Right ventricle myocardium inferior (tissue), 1 donor: ENCODE measurements at regions of chr3 and their contacts with region 1.

Region 1: GRCh38 chr3:46276502-46277099 is 34.3 kb downstream of the CCR3 start:
- DNase-seq: no peak
- ATAC-seq: peak; percentile 59

Region 2: DNA sequence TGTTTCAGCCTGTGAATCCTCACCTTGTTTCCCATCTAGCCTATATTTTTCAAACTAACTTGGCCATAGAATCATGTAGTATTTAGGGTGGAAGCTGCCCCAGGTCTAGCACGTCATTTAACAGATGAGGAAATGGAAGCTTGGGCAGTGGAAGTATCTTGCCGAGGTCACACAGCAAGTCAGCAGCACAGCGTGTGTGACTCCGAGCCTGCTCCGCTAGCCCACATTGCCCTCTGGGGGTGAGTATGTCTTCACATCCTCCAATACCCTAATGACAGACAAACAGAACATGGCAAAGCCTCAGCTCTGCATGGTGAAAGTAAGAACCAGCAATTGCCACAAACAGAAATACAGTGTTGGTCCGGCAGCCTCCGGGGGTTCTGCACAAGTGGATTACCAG is 92.0 kb after region 1 on chr3:
- intact Hi-C with region 1: loop called (anchors 10 kb)
- DNase-seq: peak; percentile 82
- ATAC-seq: peak; percentile 68

Region 3: DNA sequence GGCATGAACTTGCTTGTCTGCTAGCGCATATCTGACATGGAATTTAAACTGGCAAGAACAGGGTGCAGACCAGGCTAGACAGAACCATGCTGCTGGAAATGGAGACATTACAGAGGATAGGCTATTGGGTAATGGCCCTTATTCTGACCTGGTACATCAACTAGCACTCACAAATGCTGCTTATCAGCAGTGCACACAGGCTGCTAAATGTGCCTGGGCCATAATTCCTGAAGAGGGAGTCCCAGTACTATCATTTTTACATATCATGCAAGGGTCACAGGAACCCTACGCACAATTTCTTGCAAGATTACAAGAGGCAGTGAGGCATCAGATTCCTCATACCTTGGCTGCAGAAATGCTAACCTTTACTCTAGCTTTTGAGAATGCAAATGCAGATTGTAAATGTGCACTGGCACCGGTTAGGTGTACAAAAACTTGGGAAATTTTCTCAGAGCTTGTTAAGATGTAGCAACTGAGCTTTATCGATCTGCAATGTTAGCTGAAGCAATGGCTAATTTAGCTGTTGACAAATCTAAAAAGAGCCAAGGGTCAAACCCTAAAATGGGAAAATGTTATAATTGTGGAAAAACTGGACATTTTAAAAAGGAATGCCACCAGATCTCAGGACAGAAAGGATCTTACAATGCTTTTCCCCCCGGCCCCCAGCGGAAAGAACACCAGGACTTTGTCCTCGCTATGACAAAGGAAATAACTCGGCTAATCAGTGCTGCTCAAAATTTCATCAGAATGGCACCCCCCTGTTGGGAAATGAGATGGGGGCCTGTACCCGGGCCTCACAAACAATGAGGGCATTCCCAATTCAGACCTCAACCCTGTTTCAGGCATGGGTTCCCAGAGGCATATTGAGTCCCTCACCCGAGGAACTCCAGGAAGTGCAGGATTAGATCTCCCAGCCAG is 151.6 kb after region 1 on chr3:
- intact Hi-C with region 1: loop called (anchors 5 kb)
- DNase-seq: no peak
- ATAC-seq: peak; percentile 98

Region 4: DNA sequence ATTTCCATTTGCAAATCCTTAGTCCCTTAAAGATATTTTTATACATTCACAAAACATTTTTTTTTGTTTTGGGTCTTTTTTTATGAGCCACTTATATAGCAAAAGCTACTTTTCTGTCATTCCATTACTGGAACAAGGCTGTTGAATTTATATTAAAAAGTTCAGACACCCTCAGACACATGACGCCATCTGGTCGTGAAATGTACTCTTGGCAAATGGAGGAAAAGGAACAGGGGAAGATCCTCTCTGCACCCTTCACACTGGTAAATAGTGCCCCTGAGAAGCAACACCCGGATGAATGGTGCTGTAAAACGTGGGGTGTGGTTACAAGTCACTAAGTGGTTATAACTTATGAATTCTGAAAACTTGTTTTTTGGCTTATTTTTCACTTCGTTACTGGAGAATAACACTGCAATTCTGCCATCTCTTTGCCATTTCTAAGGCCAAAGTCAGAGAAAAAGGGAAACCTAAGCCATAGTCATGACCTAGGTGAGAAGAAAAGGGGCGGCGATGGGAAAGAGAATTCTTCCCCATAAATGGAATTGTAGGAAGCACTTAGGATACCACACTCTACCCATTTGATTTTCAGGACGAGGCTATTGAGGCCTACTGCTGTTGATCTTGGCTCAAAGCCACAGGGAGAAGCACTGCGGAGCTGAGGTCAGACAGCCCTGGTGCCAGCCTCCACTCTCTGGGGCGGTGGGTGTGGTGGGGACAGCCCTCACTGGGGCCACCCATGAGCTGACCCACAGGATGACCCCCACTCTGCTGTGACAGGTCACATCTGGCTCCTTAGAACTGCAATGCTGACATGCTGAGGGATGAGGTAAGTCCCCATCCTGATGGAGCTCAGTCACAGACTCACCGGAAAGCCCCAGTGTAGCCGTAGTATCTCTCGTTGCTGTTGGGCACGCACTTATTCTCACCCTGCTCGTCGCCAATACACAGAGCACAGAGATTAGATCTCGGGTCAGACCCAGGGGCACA is 166.3 kb after region 1 on chr3:
- intact Hi-C with region 1: loop called (anchors 5 kb)
- DNase-seq: no peak
- ATAC-seq: no peak

Region 5: GRCh38 chr3:46585799-46586693 is 309.4 kb after region 1 on chr3:
- intact Hi-C with region 1: no loop called
- DNase-seq: no peak
- ATAC-seq: no peak